ENCODE measurements at regions of chr10 and their contacts with region 1.

Region 1: GRCh38 chr10:100433253-100434240 is 29.3 kb upstream of the WNT8B start:
- DNase-seq: peak; percentile 84
- ATAC-seq: peak; percentile 92

Region 2: DNA sequence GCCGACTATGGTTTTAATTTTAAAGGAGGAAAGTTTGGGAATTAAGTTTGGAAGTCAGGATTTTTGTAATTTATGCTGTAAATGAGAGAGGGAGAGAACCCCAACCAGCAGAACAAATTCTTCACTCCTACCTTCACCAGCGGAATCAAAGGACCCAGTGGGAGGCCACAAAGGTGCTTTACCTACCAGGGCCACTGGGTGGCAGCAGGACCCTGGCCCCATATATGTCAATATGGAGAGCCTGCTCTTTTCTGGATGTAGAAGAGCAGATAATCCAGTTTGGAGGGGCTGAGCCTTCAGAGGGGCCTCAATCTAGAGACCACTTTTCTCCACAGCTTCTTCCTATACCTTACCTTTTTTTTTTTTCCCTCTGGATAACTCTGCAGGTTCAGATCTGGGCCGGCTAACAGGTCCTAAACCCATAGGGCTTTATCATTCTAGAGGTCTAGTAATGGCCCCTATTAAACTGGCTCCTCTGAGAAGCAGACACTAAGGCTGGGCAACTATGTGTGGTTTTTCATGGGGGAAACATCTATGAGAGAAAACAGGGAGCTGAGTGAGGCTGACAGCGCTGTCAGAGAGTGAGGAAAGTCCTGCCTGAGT is 95.0 kb before region 1 on chr10:
- intact Hi-C with region 1: loop called (anchors 1 kb)
- DNase-seq: peak; percentile 80
- ATAC-seq: peak; percentile 69

Region 3: DNA sequence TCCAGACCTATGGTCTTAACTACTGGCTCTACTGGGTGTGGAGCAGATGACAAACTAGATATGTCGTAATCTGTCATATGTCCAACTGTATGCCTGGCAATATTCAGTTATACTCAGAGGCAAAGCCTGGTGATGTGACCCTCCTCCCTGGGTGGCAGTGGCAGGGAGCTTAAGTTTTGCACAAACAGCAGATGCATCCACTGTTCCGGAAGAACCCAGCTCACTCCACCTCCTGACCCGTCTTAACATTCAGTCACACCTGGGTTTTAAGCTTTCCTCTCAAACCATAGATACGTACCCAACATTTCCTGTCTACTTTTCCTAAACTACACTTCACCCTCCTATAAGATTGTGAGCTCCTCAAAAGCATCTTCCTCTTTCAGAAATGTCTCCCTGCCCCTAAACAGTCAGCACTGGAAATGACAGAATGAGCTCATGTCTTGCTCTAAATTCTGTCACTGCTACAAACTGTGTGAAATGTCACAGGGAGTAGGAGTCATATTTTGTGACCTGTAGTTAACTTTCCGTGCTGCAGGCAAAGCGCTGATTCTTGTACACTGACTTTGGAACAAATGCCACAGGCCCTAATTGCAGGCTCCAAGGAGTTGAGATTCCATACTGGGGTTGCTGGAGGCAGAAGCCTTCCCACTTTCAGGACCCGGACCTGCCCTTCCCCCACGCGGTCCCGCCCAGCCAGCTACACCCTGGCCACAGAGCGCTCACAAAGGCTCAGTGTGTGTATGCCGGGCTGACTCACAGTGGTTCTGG is 62.6 kb before region 1 on chr10:
- intact Hi-C with region 1: no loop called
- DNase-seq: peak; percentile 88
- ATAC-seq: peak; percentile 60

Region 4: DNA sequence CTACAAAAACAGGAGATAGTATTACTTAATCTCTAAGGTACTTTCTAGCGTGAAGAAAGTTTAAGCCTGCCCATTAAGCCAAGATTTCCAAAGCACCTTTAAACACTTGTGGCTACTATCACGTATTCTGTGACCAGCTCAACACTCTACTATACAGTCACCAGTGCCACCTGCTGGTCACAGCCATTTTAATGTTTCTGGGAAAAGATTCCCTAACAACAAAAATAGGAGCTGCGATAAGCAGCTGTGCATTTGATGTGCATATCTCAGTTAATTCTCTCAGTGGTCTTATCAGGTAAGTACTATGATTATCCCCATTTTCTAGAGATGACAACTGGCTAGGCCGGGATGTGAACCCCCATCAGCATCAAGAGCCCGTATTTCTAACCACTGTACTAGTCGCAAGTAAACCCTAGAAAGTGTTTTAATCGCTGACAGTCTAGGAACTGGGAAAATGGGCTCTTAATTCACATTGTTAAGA is 85.3 kb after region 1 on chr10:
- intact Hi-C with region 1: loop called (anchors 1 kb)
- DNase-seq: no peak
- ATAC-seq: peak; percentile 72

Region 5: GRCh38 chr10:100878291-100878910 is 444.9 kb after region 1 on chr10:
- intact Hi-C with region 1: loop called (anchors 5 kb)
- DNase-seq: peak; percentile 54
- ATAC-seq: peak; percentile 76